AG04449 (cell line): ENCODE measurements at regions of chr17 and their contacts with region 1.

Region 1: DNA sequence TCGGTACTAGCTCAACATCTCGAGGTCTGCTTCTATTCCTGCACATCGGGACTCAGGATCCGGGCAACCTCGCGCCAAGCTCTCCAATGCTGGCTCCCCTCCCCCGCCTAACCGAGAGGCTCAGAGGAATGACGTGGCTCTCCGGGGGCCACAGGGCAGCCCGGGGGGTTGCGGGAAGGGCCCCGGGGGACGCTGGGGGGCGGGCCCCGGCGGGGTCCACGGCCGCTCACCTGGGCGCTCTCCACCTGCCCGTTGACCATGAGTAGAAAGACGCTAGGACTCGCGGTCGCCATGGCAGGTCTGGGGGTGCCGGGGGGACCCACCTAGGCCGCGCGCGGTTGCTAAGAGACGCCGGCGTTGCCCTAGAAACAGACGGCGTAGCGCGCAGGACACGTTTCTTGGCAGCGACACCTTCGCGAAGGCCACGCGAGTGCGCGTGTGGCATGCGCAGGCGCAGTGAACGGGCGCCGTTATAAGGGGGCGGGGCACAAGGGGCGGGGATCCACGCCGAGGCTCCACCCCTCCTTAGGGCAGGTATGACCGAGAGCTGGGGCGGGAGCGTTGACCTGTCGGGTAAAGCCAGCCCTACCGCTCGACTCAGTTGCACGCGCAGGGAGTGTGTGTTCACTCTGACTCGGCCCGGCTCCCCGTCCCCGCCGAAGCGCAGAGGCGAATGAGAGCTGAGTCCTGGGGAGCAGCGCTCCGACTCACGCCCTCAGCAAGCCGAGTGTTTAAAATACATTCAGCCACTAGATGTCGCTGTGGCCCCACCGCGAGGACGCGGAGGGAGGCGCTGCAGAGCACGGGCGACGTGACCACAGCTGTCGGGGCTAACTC is at the start of gene B9D1:
- DNase-seq: no peak
- H3K4me3 ChIP-seq: peak within 1 kb of the TSS; percentile 90
- CTCF ChIP-seq: peak; percentile 93

Region 2: GRCh38 chr17:19377602-19378392 is 15.3 kb after region 1 on chr17:
- CTCF ChIA-PET with region 1: interaction called, 42 read pairs
- POLR2A ChIA-PET with region 1: interaction called, 18 read pairs
- DNase-seq: peak; percentile 90
- H3K4me3 ChIP-seq: peak overlapping the region; percentile 87
- CTCF ChIP-seq: peak; percentile 9

Region 3: GRCh38 chr17:19433727-19434340 is 71.3 kb after region 1 on chr17:
- CTCF ChIA-PET with region 1: interaction called, 10 read pairs
- POLR2A ChIA-PET with region 1: no interaction called
- DNase-seq: no peak
- H3K4me3 ChIP-seq: no peak overlapping the region
- CTCF ChIP-seq: no peak

Region 4: GRCh38 chr17:19513897-19514488 is 151.5 kb after region 1 on chr17:
- CTCF ChIA-PET with region 1: interaction called, 32 read pairs
- POLR2A ChIA-PET with region 1: no interaction called
- DNase-seq: no peak
- H3K4me3 ChIP-seq: no peak overlapping the region
- CTCF ChIP-seq: peak; percentile 84